ENCODE measurements at regions of chr22 and their contacts with region 1.

Region 1: GRCh38 chr22:45478108-45478771 is 24.4 kb upstream of the FBLN1 start:
- DNase-seq: no peak
- ATAC-seq: no peak
- H3K4me3 ChIP-seq: no peak overlapping the region
- H3K4me3 Mint-ChIP-seq: no peak overlapping the region
- H3K27ac ChIP-seq: no peak overlapping the region
- H3K27ac Mint-ChIP-seq: no peak overlapping the region
- H3K4me1 ChIP-seq: no peaks in the 10 kb centered on the region
- H3K4me1 Mint-ChIP-seq: no peaks in the 10 kb centered on the region
- H3K27me3 ChIP-seq: no peaks in the 10 kb centered on the region
- H3K27me3 Mint-ChIP-seq: peaks cover 0 to 6% of the 10 kb centered on the region in 2 donors
- CTCF ChIP-seq: no peak

Region 2: GRCh38 chr22:45526768-45527360 is 48.6 kb after region 1 on chr22:
- intact Hi-C with region 1: loop called (anchors 5 kb)
- DNase-seq: no peak
- ATAC-seq: no peak
- H3K4me3 ChIP-seq: no peak overlapping the region
- H3K4me3 Mint-ChIP-seq: no peak overlapping the region
- H3K27ac ChIP-seq: no peak overlapping the region
- H3K27ac Mint-ChIP-seq: no peak overlapping the region
- H3K4me1 ChIP-seq: no peaks in the 10 kb centered on the region
- H3K4me1 Mint-ChIP-seq: no peaks in the 10 kb centered on the region
- H3K27me3 ChIP-seq: no peaks in the 10 kb centered on the region
- H3K27me3 Mint-ChIP-seq: no peaks in the 10 kb centered on the region
- CTCF ChIP-seq: no peak

Region 3: GRCh38 chr22:45553351-45554039 is 75.3 kb after region 1 on chr22:
- intact Hi-C with region 1: no loop called
- DNase-seq: peak; percentile 35 to 60
- ATAC-seq: peak; percentile 36 to 61 (median 54)
- H3K4me3 ChIP-seq: no peak overlapping the region
- H3K4me3 Mint-ChIP-seq: no peak overlapping the region
- H3K27ac ChIP-seq: no peak overlapping the region
- H3K27ac Mint-ChIP-seq: no peak overlapping the region
- H3K4me1 ChIP-seq: no peaks in the 10 kb centered on the region
- H3K4me1 Mint-ChIP-seq: no peaks in the 10 kb centered on the region
- H3K27me3 ChIP-seq: no peaks in the 10 kb centered on the region
- H3K27me3 Mint-ChIP-seq: peaks cover 6 to 17% of the 10 kb centered on the region in 2 donors
- CTCF ChIP-seq: peak; percentile 53